Testis (tissue), 5 donors: ENCODE measurements at regions of chr3 and their contacts with region 1.

Region 1: GRCh38 chr3:134464064-134464697 is 21.6 kb downstream of the ANAPC13 start:
- DNase-seq: peak; percentile 74
- H3K4me3 ChIP-seq: no peak overlapping the region
- H3K27ac ChIP-seq: no peak overlapping the region
- H3K4me1 ChIP-seq: peaks cover 27% of the 10 kb centered on the region
- H3K27me3 ChIP-seq: no peaks in the 10 kb centered on the region
- CTCF ChIP-seq: no peak
- POLR2A ChIP-seq: no peak

Region 2: GRCh38 chr3:134059671-134060560 is 404.3 kb before region 1 on chr3:
- intact Hi-C with region 1: no loop called
- DNase-seq: peak; percentile 17
- H3K4me3 ChIP-seq: no peak overlapping the region
- H3K27ac ChIP-seq: no peak overlapping the region
- H3K4me1 ChIP-seq: peaks cover 15% of the 10 kb centered on the region
- H3K27me3 ChIP-seq: no peaks in the 10 kb centered on the region
- CTCF ChIP-seq: no peak
- POLR2A ChIP-seq: no peak

Region 3: GRCh38 chr3:134373994-134374790 is 90.0 kb before region 1 on chr3 and contains the start of gene AMOTL2:
- intact Hi-C with region 1: loop called (anchors 5 kb)
- DNase-seq: peak; percentile 86
- H3K4me3 ChIP-seq: peak within 1 kb of the TSS; percentile 76 to 83
- H3K27ac ChIP-seq: peak within 1 kb of the TSS; percentile 90 to 94
- H3K4me1 ChIP-seq: peaks cover 18% of the 10 kb centered on the region
- H3K27me3 ChIP-seq: no peaks in the 10 kb centered on the region
- CTCF ChIP-seq: no peak
- POLR2A ChIP-seq: no peak
- total RNA-seq, gene AMOTL2: 35.8 to 61.0 TPM